ENCODE measurements at regions of chr22 and their contacts with region 1.

Region 1: DNA sequence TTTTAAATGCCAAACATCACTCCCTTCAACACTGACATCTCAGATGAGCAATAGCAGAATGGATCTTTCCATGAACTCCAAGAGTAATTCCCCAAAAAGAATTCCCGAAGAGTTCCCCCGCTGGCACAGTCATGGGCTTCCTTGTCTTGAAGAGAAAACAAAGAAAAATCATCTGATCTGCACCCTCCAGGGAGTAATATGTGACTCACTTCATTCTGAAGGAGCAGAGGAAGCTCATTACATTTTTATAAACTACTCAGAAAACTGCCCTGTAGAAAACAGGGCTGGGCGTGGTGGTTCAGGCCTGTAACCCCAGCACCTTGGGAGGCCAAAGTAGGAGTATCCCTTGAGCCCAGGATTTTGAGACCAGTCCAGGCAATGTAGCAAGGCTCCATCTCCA is 35.7 kb downstream of the CELSR1 start:
- DNase-seq: no peak
- H3K4me3 ChIP-seq: no peak overlapping the region
- H3K27ac ChIP-seq: no peak overlapping the region
- H3K4me1 ChIP-seq: no peaks in the 10 kb centered on the region
- H3K27me3 ChIP-seq: peaks cover 0 to 15% (median 6%) of the 10 kb centered on the region in 3 donors
- CTCF ChIP-seq: no peak
- EP300 ChIP-seq: no peak
- POLR2A ChIP-seq: no peak

Region 2: GRCh38 chr22:46425016-46425415 is 76.7 kb before region 1 on chr22:
- intact Hi-C with region 1: no loop called
- DNase-seq: no peak
- H3K4me3 ChIP-seq: no peak overlapping the region
- H3K27ac ChIP-seq: no peak overlapping the region
- H3K4me1 ChIP-seq: no peaks in the 10 kb centered on the region
- H3K27me3 ChIP-seq: peaks cover 0 to 14% (median 0%) of the 10 kb centered on the region in 3 donors
- CTCF ChIP-seq: no peak
- EP300 ChIP-seq: no peak
- POLR2A ChIP-seq: no peak

Region 3: DNA sequence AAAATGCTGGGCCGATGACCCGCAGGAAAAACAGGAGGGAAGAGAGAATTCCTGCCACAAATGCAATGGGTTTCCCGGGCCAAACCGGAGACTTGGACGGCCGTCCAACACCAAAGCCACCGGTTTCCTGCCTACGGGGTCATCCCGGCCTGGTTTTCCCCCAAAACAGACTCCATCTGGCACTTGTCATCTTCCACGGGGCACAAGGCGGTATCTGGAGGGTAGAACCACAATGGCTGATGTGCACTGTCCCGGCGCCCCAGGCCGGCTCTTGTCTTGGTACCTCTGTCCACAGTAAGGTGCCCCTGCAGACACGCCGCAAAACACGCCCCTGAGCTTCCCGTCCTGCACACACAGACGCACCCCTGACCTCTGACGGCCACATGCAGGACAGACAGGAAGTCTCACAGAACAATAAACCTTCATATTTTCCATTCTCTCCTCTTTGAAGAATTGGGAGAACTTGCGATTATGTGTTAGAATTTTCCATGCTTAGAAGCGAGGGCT is 15.6 kb after region 1 on chr22:
- intact Hi-C with region 1: loop called (anchors 1 kb)
- DNase-seq: no peak
- H3K4me3 ChIP-seq: no peak overlapping the region
- H3K27ac ChIP-seq: no peak overlapping the region
- H3K4me1 ChIP-seq: no peaks in the 10 kb centered on the region
- H3K27me3 ChIP-seq: no peaks in the 10 kb centered on the region
- CTCF ChIP-seq: no peak
- EP300 ChIP-seq: no peak
- POLR2A ChIP-seq: no peak

Region 4: GRCh38 chr22:46528121-46528610 is 26.5 kb after region 1 on chr22:
- intact Hi-C with region 1: no loop called
- DNase-seq: no peak
- H3K4me3 ChIP-seq: no peak overlapping the region
- H3K27ac ChIP-seq: no peak overlapping the region
- H3K4me1 ChIP-seq: peaks cover 0 to 8% (median 2%) of the 10 kb centered on the region in 4 donors
- H3K27me3 ChIP-seq: peaks cover 0 to 6% (median 0%) of the 10 kb centered on the region in 3 donors
- CTCF ChIP-seq: no peak
- EP300 ChIP-seq: no peak
- POLR2A ChIP-seq: no peak

Region 5: DNA sequence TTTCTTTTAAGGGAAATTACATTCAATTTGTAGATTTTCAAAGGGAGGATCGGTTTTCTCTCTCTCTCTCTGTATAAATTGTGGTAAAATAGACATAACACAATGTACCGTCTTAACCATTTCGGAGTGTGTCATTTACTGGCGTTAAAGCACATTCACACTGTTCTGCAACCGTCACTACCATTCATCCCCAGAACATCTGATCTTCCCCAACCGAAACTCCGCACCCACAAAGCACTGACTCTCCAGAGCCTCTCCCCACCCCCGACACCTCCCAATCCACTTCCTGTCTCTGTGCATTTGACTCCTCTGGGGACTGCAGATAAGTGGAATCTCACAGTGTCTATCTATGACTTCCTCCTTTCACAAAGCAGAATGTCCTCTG is 102.6 kb after region 1 on chr22:
- intact Hi-C with region 1: no loop called
- DNase-seq: no peak
- H3K4me3 ChIP-seq: no peak overlapping the region
- H3K27ac ChIP-seq: peak overlapping the region in 2 of 4 donors; percentile 22 to 38
- H3K4me1 ChIP-seq: no peaks in the 10 kb centered on the region
- H3K27me3 ChIP-seq: no peaks in the 10 kb centered on the region
- CTCF ChIP-seq: no peak
- EP300 ChIP-seq: peak in 1 of 4 donors; percentile 14
- POLR2A ChIP-seq: no peak